Activated T-helper 1 cell treated with anti-CD3 and anti-CD28 coated beads, Interleukin-12 subunit alpha, Interleukin-12 subunit beta, Interleukin-2, Interleukin-4 antibody, amounts not matched to agents 30 ng/mL and 10 ng/mL and 1 ng/mL, durations not matched to agents 14 hours and 24 hours and 36 hours (primary cell): ENCODE measurements at regions of chr9 and their contacts with region 1.

Region 1: DNA sequence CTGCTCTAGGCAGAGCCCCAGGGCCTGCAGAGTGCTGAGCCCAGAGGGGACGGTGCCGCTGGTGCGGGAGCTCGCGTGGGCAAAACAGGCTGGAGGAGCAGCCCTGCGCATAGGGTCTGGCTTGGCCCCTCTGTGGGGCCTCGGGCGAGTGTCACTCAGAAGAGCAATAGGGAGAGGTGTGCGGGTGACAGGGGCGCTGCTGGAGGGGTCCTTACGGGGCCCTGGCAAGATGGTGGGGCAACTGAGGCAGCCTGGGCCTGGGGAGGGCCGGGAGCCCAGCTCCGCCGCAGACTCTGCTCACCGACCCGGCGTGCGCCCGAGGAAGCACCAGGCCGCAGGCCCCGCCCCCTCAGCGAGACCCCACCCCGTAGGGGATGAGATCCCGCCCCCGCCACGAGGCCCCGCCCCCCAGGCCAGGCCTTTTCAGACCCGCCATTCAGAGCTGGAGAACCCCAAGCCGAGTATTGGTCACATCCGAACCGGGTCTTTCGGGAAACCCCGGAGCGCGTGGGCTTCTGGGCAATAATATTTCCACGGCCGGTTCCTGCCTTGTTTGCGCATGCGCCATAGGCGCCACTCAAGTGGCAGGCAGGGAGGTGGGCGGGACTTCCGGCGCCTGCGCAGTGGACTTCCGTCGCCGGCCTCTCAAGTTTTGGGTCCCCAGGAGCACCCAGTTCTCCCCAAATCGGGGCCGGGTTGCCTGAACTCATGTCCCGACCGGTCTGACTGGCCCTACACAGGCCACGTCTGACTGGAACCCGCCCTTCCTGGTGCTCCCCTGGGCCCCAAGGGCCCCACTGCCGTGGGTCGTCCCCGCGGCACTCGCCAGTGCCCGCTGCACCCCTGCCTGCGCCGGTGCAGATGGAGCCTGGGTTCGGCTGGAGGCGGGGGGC is 1.3 kb upstream of the RNF208 start:
- DNase-seq: peak; percentile 98
- H3K4me3 Mint-ChIP-seq: peak overlapping the region; percentile 84
- H3K27ac Mint-ChIP-seq: peak overlapping the region; percentile 78
- H3K4me1 Mint-ChIP-seq: peaks cover 5% of the 10 kb centered on the region
- H3K27me3 Mint-ChIP-seq: no peaks in the 10 kb centered on the region

Region 2: DNA sequence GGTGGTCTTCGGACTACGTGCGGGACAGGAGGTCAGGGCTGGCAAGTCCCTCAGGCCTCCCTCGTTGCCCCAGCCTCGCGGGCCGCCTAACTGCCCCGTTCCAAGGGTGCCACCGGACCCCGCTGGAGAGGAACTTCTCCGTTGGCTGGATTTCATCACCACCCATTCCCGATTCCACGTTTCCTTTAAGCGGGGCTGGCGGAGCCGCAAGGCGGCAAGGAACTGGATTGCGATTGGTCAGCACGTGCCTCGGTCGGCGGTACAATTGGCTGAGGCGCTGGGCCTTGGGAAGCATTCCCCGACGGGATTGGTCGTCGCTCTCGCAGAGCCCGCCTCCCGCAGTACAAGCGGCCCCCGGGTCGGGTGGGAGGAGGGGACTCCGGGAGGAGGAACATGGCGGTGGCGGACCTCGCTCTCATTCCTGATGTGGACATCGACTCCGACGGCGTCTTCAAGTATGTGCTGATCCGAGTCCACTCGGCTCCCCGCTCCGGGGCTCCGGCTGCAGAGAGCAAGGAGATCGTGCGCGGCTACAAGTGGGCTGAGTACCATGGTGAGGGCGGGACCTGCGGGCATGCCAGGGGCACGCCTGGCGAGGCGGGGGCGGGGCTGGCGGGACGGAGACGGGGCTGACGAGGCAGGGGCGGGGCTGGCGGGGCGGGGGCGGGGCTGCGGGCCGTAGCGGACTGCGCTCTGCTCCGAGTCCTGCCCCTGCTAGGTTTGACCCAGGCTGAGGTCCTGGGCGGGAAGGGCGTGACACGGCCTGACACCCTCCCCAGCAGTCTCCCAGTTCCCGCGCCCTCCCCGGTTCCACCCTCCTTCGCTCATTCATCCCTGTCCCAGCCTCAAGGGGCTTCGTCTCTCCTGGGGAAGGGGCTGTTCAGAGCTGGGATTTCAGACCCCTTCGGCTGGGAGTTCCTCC is 374.0 kb before region 1 on chr9 and contains the start of gene PHPT1:
- intact Hi-C with region 1: loop called (anchors 2 kb)
- DNase-seq: peak; percentile 97
- H3K4me3 Mint-ChIP-seq: peak within 1 kb of the TSS; percentile 94
- H3K27ac Mint-ChIP-seq: peak within 1 kb of the TSS; percentile 89
- H3K4me1 Mint-ChIP-seq: no peaks in the 10 kb centered on the region
- H3K27me3 Mint-ChIP-seq: peaks cover 6% of the 10 kb centered on the region
- total RNA-seq, gene PHPT1: 134 and 139 TPM in 2 replicates

Region 3: DNA sequence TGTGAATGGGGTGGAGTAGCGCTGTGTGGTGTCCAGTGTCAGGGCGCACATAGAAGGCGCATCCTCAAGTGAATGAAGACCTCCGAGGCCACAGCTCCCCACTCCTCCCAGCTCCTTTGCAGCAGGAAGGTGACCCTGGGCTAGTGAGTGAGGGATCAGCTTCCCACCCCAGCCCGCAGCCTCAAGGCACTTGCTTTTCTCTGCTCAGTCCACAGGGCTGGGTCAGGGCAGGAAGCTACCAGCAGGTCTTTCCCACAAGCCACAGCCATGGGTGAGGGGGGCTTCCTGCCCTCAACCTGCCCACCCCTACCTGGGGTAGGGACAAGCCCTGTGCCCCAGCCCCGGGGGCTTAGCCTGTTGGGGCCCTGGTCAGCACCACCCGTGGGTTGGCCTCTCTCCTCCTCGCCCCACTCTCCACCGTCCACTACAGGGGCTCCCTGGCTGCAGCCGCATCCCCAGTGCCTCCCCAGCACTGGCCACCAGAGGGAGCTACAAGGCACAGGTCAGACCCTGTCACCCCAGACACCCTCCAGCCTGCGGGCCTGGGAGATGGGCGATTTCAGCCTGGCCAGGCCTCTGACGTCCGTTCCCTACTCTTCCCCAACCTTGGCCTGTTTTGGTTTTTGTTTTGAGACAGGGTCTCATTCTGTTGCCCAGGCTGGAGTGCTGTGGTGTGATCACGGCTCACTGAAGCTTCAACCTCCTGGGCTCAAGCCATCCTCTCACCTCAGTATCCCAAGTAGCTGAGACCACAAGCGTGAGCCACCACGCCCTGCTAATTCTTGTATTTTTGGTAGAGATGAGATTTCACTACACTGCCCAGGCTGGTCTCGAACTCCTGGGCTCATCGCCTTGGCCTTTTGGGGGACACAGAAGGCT is 194.0 kb before region 1 on chr9:
- intact Hi-C with region 1: loop called (anchors 5 kb)
- DNase-seq: peak; percentile 63
- H3K4me3 Mint-ChIP-seq: peak overlapping the region; percentile 80
- H3K27ac Mint-ChIP-seq: peak overlapping the region; percentile 67
- H3K4me1 Mint-ChIP-seq: peaks cover 30% of the 10 kb centered on the region
- H3K27me3 Mint-ChIP-seq: no peaks in the 10 kb centered on the region

Region 4: DNA sequence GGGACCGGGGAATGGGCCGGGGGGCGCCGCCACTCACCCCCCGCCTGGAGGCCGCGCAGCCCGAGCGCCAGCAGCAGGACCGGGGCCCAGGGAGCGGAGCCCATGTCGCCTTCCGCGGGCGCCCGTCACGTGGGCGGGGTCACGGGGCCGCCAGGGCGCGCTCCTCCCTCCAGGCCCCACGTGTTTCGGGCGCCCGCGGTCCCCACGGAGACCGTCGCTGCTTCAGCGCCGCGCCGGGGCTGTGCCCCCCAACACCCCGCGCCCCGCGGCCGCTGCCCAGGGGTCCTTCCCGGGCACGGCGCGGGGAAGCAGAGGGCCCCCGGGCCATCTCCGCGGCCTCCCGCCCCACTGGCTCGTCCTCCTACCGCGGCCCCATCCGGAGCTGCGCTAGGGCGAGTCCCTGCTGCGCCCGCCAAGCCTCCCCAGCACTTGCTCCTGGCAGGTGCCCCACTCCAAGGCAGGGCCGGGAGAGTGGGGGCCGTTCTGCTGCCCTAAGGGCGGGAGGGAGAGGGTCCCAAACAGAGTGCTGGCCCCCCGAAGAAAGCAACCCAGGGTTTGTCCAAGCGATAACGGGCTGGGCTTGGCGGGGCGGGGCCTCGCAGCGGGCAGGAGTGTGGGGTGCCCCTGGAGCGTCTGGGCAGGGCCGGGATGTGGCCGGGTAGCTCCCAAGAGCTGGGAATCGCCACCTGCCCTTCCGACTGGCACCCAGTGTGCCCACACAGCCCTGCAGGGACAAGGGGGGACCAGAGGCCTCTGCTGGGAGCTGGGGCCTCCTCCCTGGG is 108.5 kb before region 1 on chr9 and contains the start of gene DPP7:
- intact Hi-C with region 1: loop called (anchors 1 kb)
- DNase-seq: peak; percentile 76
- H3K4me3 Mint-ChIP-seq: peak within 1 kb of the TSS; percentile 82
- H3K27ac Mint-ChIP-seq: peak within 1 kb of the TSS; percentile 52
- H3K4me1 Mint-ChIP-seq: peaks cover 11% of the 10 kb centered on the region
- H3K27me3 Mint-ChIP-seq: no peaks in the 10 kb centered on the region
- total RNA-seq, gene DPP7: 371 and 394 TPM in 2 replicates

Region 5: DNA sequence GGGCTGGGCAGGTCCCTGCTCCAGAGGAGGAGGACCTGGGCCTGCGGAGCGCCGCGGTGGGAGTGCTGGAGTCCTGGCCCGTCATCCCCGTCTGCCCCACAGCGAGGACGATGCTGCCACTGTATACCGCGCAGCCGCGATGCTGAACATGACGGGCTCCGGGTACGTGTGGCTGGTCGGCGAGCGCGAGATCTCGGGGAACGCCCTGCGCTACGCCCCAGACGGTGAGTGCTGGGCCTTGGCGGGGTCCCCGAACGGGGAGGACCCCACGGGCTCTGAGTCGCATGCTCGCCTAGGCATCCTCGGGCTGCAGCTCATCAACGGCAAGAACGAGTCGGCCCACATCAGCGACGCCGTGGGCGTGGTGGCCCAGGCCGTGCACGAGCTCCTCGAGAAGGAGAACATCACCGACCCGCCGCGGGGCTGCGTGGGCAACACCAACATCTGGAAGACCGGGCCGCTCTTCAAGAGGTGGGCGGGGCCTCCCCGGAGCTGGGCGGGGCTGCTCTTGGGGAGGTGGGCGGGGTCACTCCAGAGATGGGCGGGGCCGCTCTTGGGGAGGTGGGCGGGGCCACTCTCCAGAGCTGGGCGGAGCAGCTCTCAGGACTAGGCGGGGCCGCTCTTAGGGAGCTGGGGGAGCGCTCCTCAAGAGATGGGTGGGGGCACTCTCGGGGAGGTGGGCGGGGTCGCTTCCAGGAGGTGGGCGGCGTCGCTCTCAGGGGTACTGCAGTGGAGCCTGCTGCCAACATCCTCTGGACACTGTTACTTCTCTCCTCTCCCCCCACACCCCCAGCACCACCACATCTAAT is 66.6 kb before region 1 on chr9:
- intact Hi-C with region 1: loop called (anchors 2 kb)
- DNase-seq: peak; percentile 43
- H3K4me3 Mint-ChIP-seq: peak overlapping the region; percentile 21
- H3K27ac Mint-ChIP-seq: no peak overlapping the region
- H3K4me1 Mint-ChIP-seq: no peaks in the 10 kb centered on the region
- H3K27me3 Mint-ChIP-seq: peaks cover 26% of the 10 kb centered on the region

Region 6: GRCh38 chr9:137200311-137201204 is 22.8 kb before region 1 on chr9 and contains the start of gene TPRN:
- intact Hi-C with region 1: loop called (anchors 1 kb)
- DNase-seq: peak; percentile 99
- H3K4me3 Mint-ChIP-seq: peak within 1 kb of the TSS; percentile 85
- H3K27ac Mint-ChIP-seq: peak within 1 kb of the TSS; percentile 75
- H3K4me1 Mint-ChIP-seq: peaks cover 23% of the 10 kb centered on the region
- H3K27me3 Mint-ChIP-seq: no peaks in the 10 kb centered on the region
- total RNA-seq, gene TPRN: 15.6 and 17.2 TPM in 2 replicates

Region 7: DNA sequence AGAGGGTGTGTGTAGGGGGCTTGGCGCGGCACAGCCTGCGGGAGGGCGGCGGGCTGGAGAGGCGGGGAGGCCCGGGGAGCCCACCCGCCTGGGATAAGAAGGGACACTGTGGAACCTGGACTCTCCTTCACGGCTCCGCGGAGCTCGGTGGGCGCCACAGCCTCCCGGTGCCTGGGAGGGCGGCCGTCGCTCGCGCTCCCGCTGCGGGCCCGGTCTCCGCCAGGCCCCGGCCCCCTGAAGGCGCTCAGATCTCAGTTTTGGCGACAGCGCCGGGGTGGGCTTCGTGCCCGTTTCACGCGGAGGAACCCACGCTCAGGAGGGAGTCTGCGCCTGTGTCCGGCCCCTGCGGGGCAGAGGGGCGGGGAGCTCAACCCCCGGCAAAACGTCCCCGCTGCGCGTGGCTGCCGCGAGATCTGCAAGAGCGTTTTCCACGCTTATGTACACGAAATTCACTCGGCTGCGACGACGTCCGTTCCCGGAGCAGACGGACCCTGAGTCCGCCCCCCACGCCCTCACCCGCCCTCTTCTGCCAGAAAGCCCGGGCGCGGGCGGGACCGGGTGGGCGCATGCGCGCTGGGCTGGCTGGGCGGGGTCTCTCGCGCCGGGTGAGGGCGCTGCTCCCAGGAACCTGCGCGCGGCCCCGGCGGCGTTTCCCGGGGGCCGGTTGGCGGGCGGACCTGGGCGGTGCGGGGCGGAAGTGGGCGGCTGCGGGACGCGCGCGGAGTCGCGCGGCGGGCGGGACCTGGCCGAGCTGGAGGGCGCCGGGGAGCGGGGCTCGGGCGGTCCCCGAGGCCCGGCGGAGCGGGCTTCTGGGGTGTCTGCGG is 31.5 kb after region 1 on chr9 and contains the start of gene NELFB:
- intact Hi-C with region 1: loop called (anchors 1 kb)
- DNase-seq: peak; percentile 97
- H3K4me3 Mint-ChIP-seq: peak within 1 kb of the TSS; percentile 90
- H3K27ac Mint-ChIP-seq: peak within 1 kb of the TSS; percentile 87
- H3K4me1 Mint-ChIP-seq: peaks cover 5% of the 10 kb centered on the region
- H3K27me3 Mint-ChIP-seq: peaks cover 2% of the 10 kb centered on the region
- total RNA-seq, gene NELFB: 70.8 and 72.1 TPM in 2 replicates

Region 8: GRCh38 chr9:137302176-137302994 is 79.1 kb after region 1 on chr9 and contains the start of gene NRARP:
- intact Hi-C with region 1: no loop called
- DNase-seq: peak; percentile 91
- H3K4me3 Mint-ChIP-seq: peak within 1 kb of the TSS; percentile 74
- H3K27ac Mint-ChIP-seq: peak within 1 kb of the TSS; percentile 18
- H3K4me1 Mint-ChIP-seq: peaks cover 9% of the 10 kb centered on the region
- H3K27me3 Mint-ChIP-seq: peaks cover 26% of the 10 kb centered on the region
- total RNA-seq, gene NRARP: 15.2 and 15.4 TPM in 2 replicates